ENCODE measurements at regions of chrX and their contacts with region 1.

Region 1: DNA sequence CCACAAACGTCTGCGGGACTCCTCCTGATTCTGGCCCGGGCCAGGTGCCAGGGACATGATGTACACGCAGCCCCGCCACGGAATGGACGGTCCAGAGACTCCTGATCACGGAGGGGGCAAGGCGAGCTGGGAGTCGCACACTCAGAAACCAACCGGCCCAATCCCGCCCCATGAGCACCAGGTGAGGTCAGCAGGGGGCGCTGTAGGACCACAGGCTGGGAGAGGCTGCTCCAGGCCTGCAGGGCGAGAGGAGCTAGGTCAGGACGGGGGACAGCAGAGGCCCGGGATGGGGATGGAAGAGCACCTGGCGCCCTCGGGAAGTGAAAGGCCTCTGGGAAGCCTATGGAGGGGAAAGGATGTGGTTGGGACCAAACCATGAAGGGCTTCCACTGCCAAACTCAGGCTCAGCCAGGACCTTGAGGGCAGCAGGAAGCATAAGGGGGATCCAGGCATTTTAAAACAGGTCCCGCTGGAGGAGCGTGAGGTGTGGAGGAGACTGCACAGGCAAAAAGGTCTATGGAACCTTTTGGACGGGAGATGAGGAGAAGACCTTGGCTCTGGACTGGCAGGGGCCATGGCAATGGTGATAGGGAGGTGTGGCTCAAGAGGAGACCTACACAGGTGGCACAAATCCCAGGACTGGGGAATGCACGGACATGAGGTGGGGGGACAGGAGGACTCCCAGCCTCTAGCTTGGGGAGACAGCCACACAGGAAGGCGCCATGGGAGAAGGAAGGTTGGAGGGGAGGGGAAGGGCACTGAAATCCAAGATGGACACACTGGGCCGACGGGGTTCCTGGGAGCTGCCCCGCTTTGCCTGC is 79.2 kb downstream of the MTMR1 start:
- DNase-seq: peak; percentile 78
- ATAC-seq: peak; percentile 91
- H3K4me3 Mint-ChIP-seq: no peak overlapping the region
- H3K27ac Mint-ChIP-seq: no peak overlapping the region
- H3K4me1 Mint-ChIP-seq: peaks cover 5% of the 10 kb centered on the region
- H3K27me3 Mint-ChIP-seq: no peaks in the 10 kb centered on the region

Region 2: DNA sequence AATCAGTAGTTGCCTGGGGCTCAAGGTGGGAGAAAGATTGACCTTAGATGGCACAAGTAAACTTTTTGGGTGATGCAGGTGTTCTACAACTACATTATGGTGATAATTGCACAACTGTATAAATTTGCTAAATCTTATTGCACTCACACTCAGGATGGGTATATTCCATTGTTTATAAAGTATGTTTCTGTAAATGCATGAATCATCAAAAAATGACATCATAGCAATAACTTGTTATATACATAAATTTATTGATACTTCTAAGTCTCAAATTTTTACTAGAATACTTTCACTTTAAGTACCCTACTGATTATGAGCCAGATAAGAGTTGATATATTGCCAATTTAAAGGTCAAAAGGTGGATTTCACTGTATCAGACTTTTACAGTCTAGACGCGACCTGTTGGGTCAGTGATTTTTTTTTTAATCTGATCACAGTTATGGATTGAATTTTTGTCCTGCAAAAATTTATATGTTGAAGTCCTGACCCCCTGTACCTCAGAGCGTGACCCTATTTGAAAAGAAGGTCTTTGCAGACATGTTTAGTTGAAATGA is 116.6 kb before region 1 on chrX:
- CTCF ChIA-PET with region 1: no interaction called
- DNase-seq: no peak
- ATAC-seq: no peak
- H3K4me3 Mint-ChIP-seq: no peak overlapping the region
- H3K27ac Mint-ChIP-seq: no peak overlapping the region
- H3K4me1 Mint-ChIP-seq: no peaks in the 10 kb centered on the region
- H3K27me3 Mint-ChIP-seq: no peaks in the 10 kb centered on the region

Region 3: DNA sequence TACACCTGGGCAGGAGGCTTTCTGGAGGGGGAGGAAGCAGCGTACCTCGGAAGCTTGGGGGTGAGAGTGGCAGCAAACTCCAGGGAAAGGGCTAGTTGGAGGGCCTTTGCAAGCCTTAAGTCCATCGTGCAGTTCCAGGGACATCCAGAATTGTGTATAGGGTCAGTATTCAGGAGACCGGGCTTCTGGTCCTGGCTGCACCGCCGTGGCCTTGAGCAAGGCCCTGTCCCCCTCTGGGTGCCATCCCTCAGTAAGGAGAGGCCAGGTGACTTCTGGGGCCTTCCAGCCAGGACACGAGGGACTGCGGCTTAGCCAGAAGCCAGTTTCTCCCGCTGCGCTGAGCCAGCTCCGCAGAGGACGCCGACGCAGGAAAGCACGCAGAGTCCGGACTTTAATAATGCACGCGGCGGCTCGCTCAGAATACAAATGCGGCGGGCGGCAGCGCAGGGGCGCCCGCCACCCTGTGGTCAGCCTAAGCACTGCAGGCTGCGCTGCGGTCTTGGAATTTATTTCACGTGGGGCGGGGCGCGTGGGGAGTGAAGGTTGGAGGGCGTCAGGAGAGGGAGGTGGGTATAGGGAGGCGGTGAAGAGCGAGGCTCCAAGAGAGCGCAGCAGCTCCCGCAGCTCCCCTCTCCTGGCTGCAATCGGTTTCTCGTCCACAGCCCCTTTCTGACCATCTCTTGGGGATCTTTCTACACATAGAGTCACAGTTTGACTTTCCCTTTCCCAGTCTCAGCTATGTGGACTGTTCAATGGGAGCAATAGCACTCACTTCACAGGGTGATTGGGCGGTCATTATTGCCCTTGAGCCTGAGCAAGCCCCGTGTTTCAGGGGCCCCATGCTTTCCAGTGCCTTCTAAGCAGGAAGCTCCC is 310.0 kb after region 1 on chrX:
- CTCF ChIA-PET with region 1: interaction called, 77 read pairs
- DNase-seq: peak; percentile 59
- ATAC-seq: peak; percentile 94
- H3K4me3 Mint-ChIP-seq: no peak overlapping the region
- H3K27ac Mint-ChIP-seq: no peak overlapping the region
- H3K4me1 Mint-ChIP-seq: no peaks in the 10 kb centered on the region
- H3K27me3 Mint-ChIP-seq: peaks cover 38% of the 10 kb centered on the region

Measured in activated CD8-positive, alpha-beta memory T cell treated with anti-CD3 and anti-CD28 coated beads, Interleukin-2, amount 10 ng/mL, durations not matched to agents 7 days and 5 days (primary cell).